ENCODE measurements at regions of chr9 and their contacts with region 1.

Region 1: GRCh38 chr9:214648-215493 is at the start of gene DOCK8:
- DNase-seq: peak; percentile 74 to 88 (median 77)
- ATAC-seq: peak; percentile 92
- H3K4me3 ChIP-seq: peak within 1 kb of the TSS; percentile 57
- H3K27ac ChIP-seq: peak within 1 kb of the TSS; percentile 92
- H3K4me1 ChIP-seq: peaks cover 19 to 40% of the 10 kb centered on the region in 2 experiments; a peak in 4 of 5 replicates
- H3K27me3 ChIP-seq: no peaks in the 10 kb centered on the region
- CTCF ChIP-seq: peak; percentile 60 to 76 (median 66); a peak in 5 of 6 replicates
- EP300 ChIP-seq: no peak
- POLR2A ChIP-seq: peak; percentile 77
- RAD21 ChIP-seq: peak; percentile 65 to 71
- polyA plus RNA-seq, gene DOCK8: 14.4 to 14.5 TPM

Region 2: DNA sequence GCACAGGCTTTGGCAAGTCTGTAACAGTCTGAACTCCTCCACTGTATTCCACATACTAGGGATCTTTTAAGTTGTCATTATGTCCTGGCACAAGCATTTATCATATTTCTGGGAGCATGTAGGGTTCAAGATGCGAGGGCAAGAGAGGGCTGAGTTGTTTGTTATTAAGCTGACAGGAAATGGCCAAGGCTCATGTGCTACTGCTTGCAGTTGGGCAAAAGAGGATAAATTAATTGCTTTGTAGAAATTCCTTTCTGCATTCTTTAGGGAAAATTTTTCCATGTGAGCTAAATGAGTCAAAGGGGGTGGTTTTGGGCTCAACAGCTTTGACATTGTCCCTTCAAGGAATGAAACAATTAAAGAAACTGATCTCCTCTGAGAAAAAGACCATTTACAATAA is 35.2 kb after region 1 on chr9:
- CTCF ChIA-PET with region 1: no interaction called
- POLR2A ChIA-PET with region 1: interaction called, 6 read pairs
- in situ Hi-C with region 1: no loop called
- intact Hi-C with region 1: loop called (anchors 5 kb)
- DNase-seq: no peak
- ATAC-seq: no peak
- H3K4me3 ChIP-seq: no peak overlapping the region
- H3K27ac ChIP-seq: peak overlapping the region; percentile 89
- H3K4me1 ChIP-seq: peaks cover 18 to 54% of the 10 kb centered on the region in 2 experiments; a peak in 4 of 5 replicates
- H3K27me3 ChIP-seq: no peaks in the 10 kb centered on the region
- CTCF ChIP-seq: no peak
- EP300 ChIP-seq: no peak
- POLR2A ChIP-seq: no peak
- RAD21 ChIP-seq: no peak

Region 3: GRCh38 chr9:272251-273213 is 57.7 kb after region 1 on chr9:
- CTCF ChIA-PET with region 1: no interaction called
- POLR2A ChIA-PET with region 1: interaction called, 21 read pairs
- in situ Hi-C with region 1: no loop called
- intact Hi-C with region 1: loop called (anchors 1 kb)
- DNase-seq: peak in 3 of 4 experiments; percentile 26 to 85 (median 58)
- ATAC-seq: peak; percentile 87
- H3K4me3 ChIP-seq: peak overlapping the region; percentile 31; the same call in 1 of the 2 replicates
- H3K27ac ChIP-seq: peak overlapping the region; percentile 98
- H3K4me1 ChIP-seq: peaks cover 0 to 39% of the 10 kb centered on the region in 2 experiments; a peak in 2 of 5 replicates
- H3K27me3 ChIP-seq: no peaks in the 10 kb centered on the region
- CTCF ChIP-seq: no peak
- EP300 ChIP-seq: peak; percentile 90
- POLR2A ChIP-seq: peak; percentile 67
- RAD21 ChIP-seq: 0 out of 4 replicates have a peak, but pooled peaks of 1 of the 2 experiments have one; percentile 19

Region 4: DNA sequence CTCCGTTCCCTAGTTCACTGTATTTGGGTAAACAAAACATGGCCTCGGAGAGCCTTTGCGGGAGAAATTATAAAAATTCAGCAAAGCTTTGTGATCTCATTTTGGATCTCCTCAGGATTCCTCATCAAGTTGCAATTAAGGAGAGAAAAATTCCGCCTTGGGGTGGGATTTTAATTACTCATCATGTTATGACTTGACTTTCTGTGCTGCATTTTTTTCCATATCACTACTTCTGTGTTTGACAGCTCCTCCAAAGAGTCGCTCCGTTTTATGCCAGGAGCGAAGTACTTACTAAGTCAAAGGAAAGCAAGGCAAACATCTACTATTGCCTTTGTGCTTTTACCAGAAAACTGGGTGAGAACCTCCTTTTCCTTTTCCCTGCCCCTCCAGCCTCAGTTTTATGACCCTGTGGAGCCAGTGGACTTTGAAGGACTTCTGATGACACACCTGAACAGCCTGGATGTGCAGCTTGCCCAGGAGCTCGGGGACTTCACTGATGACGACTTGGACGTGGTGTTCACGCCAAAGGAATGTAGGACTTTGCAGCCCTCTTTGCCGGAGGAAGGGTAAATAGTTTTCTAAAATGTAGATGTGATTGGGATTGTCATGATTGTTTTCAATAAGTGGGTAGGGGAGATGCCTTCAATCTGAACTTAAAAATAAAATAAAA is 71.3 kb after region 1 on chr9:
- CTCF ChIA-PET with region 1: no interaction called
- POLR2A ChIA-PET with region 1: interaction called, 3 read pairs
- in situ Hi-C with region 1: loop called (anchors 5 kb)
- intact Hi-C with region 1: no loop called
- DNase-seq: no peak
- ATAC-seq: no peak
- H3K4me3 ChIP-seq: no peak overlapping the region
- H3K27ac ChIP-seq: no peak overlapping the region
- H3K4me1 ChIP-seq: peaks cover 0 to 7% of the 10 kb centered on the region in 2 experiments; a peak in 2 of 5 replicates
- H3K27me3 ChIP-seq: no peaks in the 10 kb centered on the region
- CTCF ChIP-seq: no peak
- EP300 ChIP-seq: no peak
- POLR2A ChIP-seq: no peak
- RAD21 ChIP-seq: no peak

Region 5: DNA sequence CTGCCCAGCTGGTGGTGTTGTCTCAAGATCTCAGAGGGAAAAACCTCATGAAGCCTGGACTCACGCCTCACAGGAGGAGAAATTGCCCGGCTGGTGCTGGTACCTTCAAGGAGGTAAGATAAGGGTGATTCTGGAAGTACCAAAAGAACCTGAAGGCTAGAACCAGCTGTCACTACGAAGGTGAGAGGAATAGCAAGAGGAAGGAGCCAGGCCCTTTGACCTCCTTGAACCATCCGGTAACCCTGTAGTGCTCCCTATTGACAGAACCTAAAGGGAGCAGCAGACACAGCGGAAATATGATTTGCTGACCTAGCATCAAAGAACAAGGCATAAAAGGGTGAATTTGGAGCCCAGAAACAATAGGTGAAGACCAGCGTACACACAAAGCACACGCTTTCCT is 92.0 kb after region 1 on chr9:
- CTCF ChIA-PET with region 1: no interaction called
- POLR2A ChIA-PET with region 1: interaction called, 3 read pairs
- in situ Hi-C with region 1: no loop called
- intact Hi-C with region 1: loop called (anchors 10 kb)
- DNase-seq: peak in 2 of 4 experiments; percentile 22 to 54
- ATAC-seq: peak; percentile 87
- H3K4me3 ChIP-seq: no peak overlapping the region
- H3K27ac ChIP-seq: no peak overlapping the region
- H3K4me1 ChIP-seq: peaks cover 0 to 2% of the 10 kb centered on the region in 2 experiments; a peak in 2 of 5 replicates
- H3K27me3 ChIP-seq: no peaks in the 10 kb centered on the region
- CTCF ChIP-seq: peak; percentile 40 to 58 (median 57)
- EP300 ChIP-seq: no peak
- POLR2A ChIP-seq: no peak
- RAD21 ChIP-seq: peak; percentile 31 to 70; a peak in 3 of 4 replicates